CD4-positive, alpha-beta T cell (primary cell): ENCODE measurements at regions of chr1 and their contacts with region 1.

Region 1: DNA sequence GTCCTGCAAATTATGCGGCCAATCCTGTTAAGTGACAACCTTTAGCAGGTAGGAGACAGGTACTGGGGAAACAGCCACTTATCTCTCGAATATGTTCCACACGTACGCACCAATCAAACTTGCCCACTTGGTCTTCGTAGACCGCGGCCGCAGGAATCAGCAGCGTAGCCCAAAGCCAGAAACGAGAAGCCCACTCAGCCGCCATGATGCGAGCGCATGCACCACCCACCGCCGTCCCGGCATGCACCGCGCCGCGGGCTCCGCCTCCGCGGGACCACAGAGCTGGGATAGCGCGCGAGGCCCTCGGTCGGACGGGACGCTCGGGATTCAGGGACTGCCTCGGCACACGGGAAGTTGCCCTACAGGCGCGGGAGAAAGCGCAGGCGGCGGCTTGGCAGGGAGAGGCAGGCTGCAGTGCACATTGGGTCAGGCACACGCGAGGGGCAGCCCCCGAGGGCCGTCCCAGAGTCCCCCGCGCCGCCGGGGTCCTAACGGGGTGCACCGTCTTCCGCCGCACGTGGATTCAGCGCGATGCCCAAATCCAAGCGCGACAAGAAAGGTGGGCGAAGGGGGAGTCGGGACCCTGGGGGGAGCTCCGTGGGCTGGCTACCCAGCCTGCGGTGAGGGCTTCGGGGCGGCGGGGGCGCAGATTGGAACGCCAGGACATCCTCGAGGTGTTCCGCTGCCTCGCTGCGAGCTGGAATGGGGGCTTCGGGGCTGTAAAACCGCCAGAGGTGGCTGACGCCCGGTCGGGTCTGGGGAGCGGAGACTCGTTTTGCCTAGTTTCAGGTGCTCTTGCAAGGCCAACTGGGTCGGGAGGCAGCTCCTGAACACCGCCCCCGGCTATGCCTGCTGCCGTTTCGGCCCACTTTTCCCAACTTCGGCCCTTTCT is at the starts of genes EMC1 and MRTO4:
- DNase-seq: peak; percentile 79 to 92 (median 86)
- ATAC-seq: peak; percentile 93
- H3K4me3 ChIP-seq: peak within 1 kb of the TSS; percentile 80
- H3K4me3 Mint-ChIP-seq: peak within 1 kb of the TSS; percentile 96
- H3K27ac ChIP-seq: peak within 1 kb of the TSS; percentile 93 to 95
- H3K27ac Mint-ChIP-seq: peak within 1 kb of the TSS; percentile 94
- H3K4me1 ChIP-seq: peaks cover 40% of the 10 kb centered on the region
- H3K4me1 Mint-ChIP-seq: peaks cover 34% of the 10 kb centered on the region
- H3K27me3 ChIP-seq: no peaks in the 10 kb centered on the region
- H3K27me3 Mint-ChIP-seq: no peaks in the 10 kb centered on the region
- CTCF ChIP-seq: no peak
- total RNA-seq, gene EMC1: 21.9 to 22.2 TPM
- total RNA-seq, gene MRTO4: 10.2 to 12.0 TPM

Region 2: GRCh38 chr1:19209990-19210771 is 41.4 kb before region 1 on chr1 and contains the start of gene UBR4:
- CTCF ChIA-PET with region 1: no interaction called
- POLR2A ChIA-PET with region 1: interaction called, 26 read pairs
- intact Hi-C with region 1: loop called (anchors 1 to 2 kb)
- DNase-seq: peak; percentile 92 to 99 (median 96)
- ATAC-seq: peak; percentile 92
- H3K4me3 ChIP-seq: peak within 1 kb of the TSS; percentile 93
- H3K4me3 Mint-ChIP-seq: peak within 1 kb of the TSS; percentile 96
- H3K27ac ChIP-seq: peak within 1 kb of the TSS; percentile 87 to 92
- H3K27ac Mint-ChIP-seq: peak within 1 kb of the TSS; percentile 95
- H3K4me1 ChIP-seq: peaks cover 42% of the 10 kb centered on the region
- H3K4me1 Mint-ChIP-seq: peaks cover 77% of the 10 kb centered on the region
- H3K27me3 ChIP-seq: no peaks in the 10 kb centered on the region
- H3K27me3 Mint-ChIP-seq: no peaks in the 10 kb centered on the region
- CTCF ChIP-seq: no peak
- total RNA-seq, gene UBR4: 116 to 125 TPM

Region 3: GRCh38 chr1:19311959-19312781 is 60.6 kb after region 1 on chr1 and contains the starts of genes AKR7A2 and SLC66A1:
- CTCF ChIA-PET with region 1: no interaction called
- POLR2A ChIA-PET with region 1: interaction called, 3 read pairs
- intact Hi-C with region 1: loop called in 1 of 2 experiments (anchors 2 kb)
- DNase-seq: peak; percentile 78 to 96 (median 87)
- ATAC-seq: peak; percentile 98
- H3K4me3 ChIP-seq: peak within 1 kb of the TSS; percentile 90
- H3K4me3 Mint-ChIP-seq: peak within 1 kb of the TSS; percentile 95
- H3K27ac ChIP-seq: peak within 1 kb of the TSS in 1 of 2 donors; percentile 22
- H3K27ac Mint-ChIP-seq: peak within 1 kb of the TSS; percentile 55
- H3K4me1 ChIP-seq: peaks cover 45% of the 10 kb centered on the region
- H3K4me1 Mint-ChIP-seq: peaks cover 35% of the 10 kb centered on the region
- H3K27me3 ChIP-seq: no peaks in the 10 kb centered on the region
- H3K27me3 Mint-ChIP-seq: no peaks in the 10 kb centered on the region
- CTCF ChIP-seq: no peak
- total RNA-seq, gene AKR7A2: 11.1 to 11.8 TPM
- total RNA-seq, gene SLC66A1: 2.3 to 3.7 TPM